ENCODE measurements at regions of chr3 and their contacts with region 1.

Region 1: GRCh38 chr3:30658328-30659052 is 52.1 kb downstream of the TGFBR2 start:
- DNase-seq: peak in 7 of 9 donors; percentile 72 to 86 (median 84)
- ATAC-seq: peak; percentile 71
- H3K4me3 ChIP-seq: peak overlapping the region; percentile 24
- H3K4me3 Mint-ChIP-seq: peak overlapping the region; percentile 71 to 88 (median 80)
- H3K27ac ChIP-seq: peak overlapping the region; percentile 84
- H3K27ac Mint-ChIP-seq: peak overlapping the region; percentile 91 to 99 (median 97)
- H3K4me1 ChIP-seq: peaks cover 82 to 98% of the 10 kb centered on the region in 2 donors
- H3K4me1 Mint-ChIP-seq: peaks cover 67 to 100% (median 94%) of the 10 kb centered on the region in 7 donors
- H3K27me3 ChIP-seq: no peaks in the 10 kb centered on the region
- H3K27me3 Mint-ChIP-seq: no peaks in the 10 kb centered on the region

Region 2: GRCh38 chr3:30644593-30645012 is 13.9 kb before region 1 on chr3:
- CTCF ChIA-PET with region 1: interaction called, 8 read pairs
- POLR2A ChIA-PET with region 1: interaction called, 368 read pairs
- intact Hi-C with region 1: loop called (anchors 1 kb)
- DNase-seq: peak in 7 of 9 donors; percentile 51 to 83 (median 71)
- ATAC-seq: peak; percentile 77
- H3K4me3 ChIP-seq: peak overlapping the region; percentile 23
- H3K4me3 Mint-ChIP-seq: peak overlapping the region; percentile 60 to 88 (median 77)
- H3K27ac ChIP-seq: peak overlapping the region; percentile 69
- H3K27ac Mint-ChIP-seq: peak overlapping the region; percentile 91 to 98 (median 95)
- H3K4me1 ChIP-seq: peaks cover 88 to 98% of the 10 kb centered on the region in 2 donors
- H3K4me1 Mint-ChIP-seq: peaks cover 80 to 99% (median 94%) of the 10 kb centered on the region in 7 donors
- H3K27me3 ChIP-seq: no peaks in the 10 kb centered on the region
- H3K27me3 Mint-ChIP-seq: no peaks in the 10 kb centered on the region

Region 3: DNA sequence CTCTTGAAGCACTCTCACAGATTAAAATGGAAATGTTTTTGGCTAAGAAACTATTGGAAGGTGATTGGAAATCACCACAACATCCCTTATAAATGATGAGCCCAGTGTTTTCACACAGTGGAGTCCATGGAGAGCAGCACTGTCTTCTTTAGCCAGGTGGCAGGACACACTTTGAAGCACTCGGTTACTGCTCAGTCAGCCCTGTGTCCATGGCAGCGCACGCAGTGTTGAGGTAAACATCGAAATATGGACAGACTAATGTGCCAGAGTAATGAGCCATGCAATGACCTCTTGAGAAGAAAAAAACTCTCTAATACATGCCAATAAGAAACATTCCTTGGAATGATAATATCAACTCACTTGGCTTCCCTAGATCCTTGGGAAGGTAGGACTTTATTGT is 14.5 kb after region 1 on chr3:
- CTCF ChIA-PET with region 1: interaction called, 4 read pairs
- POLR2A ChIA-PET with region 1: interaction called, 109 read pairs
- intact Hi-C with region 1: loop called in 1 of 2 experiments (anchors 2 kb)
- DNase-seq: no peak
- ATAC-seq: no peak
- H3K4me3 ChIP-seq: peak overlapping the region; percentile 15
- H3K4me3 Mint-ChIP-seq: peak overlapping the region; percentile 69 to 93 (median 80)
- H3K27ac ChIP-seq: peak overlapping the region; percentile 59
- H3K27ac Mint-ChIP-seq: peak overlapping the region; percentile 74 to 99 (median 95)
- H3K4me1 ChIP-seq: peaks cover 19 to 85% of the 10 kb centered on the region in 2 donors
- H3K4me1 Mint-ChIP-seq: peaks cover 74 to 100% (median 99%) of the 10 kb centered on the region in 7 donors
- H3K27me3 ChIP-seq: no peaks in the 10 kb centered on the region
- H3K27me3 Mint-ChIP-seq: no peaks in the 10 kb centered on the region

Region 4: GRCh38 chr3:30681643-30682211 is 23.2 kb after region 1 on chr3:
- CTCF ChIA-PET with region 1: interaction called, 3 read pairs
- POLR2A ChIA-PET with region 1: interaction called, 34 read pairs
- intact Hi-C with region 1: no loop called
- DNase-seq: peak in 2 of 9 donors; percentile 25 to 26
- ATAC-seq: peak; percentile 51
- H3K4me3 ChIP-seq: no peak overlapping the region
- H3K4me3 Mint-ChIP-seq: peak overlapping the region; percentile 39 to 88 (median 78)
- H3K27ac ChIP-seq: peak overlapping the region; percentile 52
- H3K27ac Mint-ChIP-seq: peak overlapping the region; percentile 62 to 98 (median 93)
- H3K4me1 ChIP-seq: peaks cover 32 to 84% of the 10 kb centered on the region in 2 donors
- H3K4me1 Mint-ChIP-seq: peaks cover 61 to 100% (median 93%) of the 10 kb centered on the region in 7 donors
- H3K27me3 ChIP-seq: no peaks in the 10 kb centered on the region
- H3K27me3 Mint-ChIP-seq: no peaks in the 10 kb centered on the region

Region 5: GRCh38 chr3:31462050-31462569 is 803.6 kb after region 1 on chr3:
- CTCF ChIA-PET with region 1: no interaction called
- POLR2A ChIA-PET with region 1: no interaction called
- intact Hi-C with region 1: loop called in 1 of 2 experiments (anchors 10 kb)
- DNase-seq: peak in 7 of 9 donors; percentile 78 to 93 (median 86)
- ATAC-seq: peak; percentile 93
- H3K4me3 ChIP-seq: peak overlapping the region; percentile 49
- H3K4me3 Mint-ChIP-seq: peak overlapping the region; percentile 28 to 95 (median 78)
- H3K27ac ChIP-seq: peak overlapping the region; percentile 68
- H3K27ac Mint-ChIP-seq: peak overlapping the region; percentile 70 to 100 (median 96)
- H3K4me1 ChIP-seq: peaks cover 49 to 59% of the 10 kb centered on the region in 2 donors
- H3K4me1 Mint-ChIP-seq: peaks cover 14 to 79% (median 68%) of the 10 kb centered on the region in 7 donors
- H3K27me3 ChIP-seq: no peaks in the 10 kb centered on the region
- H3K27me3 Mint-ChIP-seq: no peaks in the 10 kb centered on the region

Measured in naive thymus-derived CD4-positive, alpha-beta T cell (primary cell).